Aorta (tissue), 5 donors: ENCODE measurements at regions of chr5 and their contacts with region 1.

Region 1: GRCh38 chr5:112860929-112861637 is at the start of gene SRP19:
- DNase-seq: peak; percentile 97 to 98
- ATAC-seq: peak; percentile 98
- H3K4me3 ChIP-seq: peak within 1 kb of the TSS; percentile 73 to 93
- H3K27ac ChIP-seq: peak within 1 kb of the TSS in 1 of 2 donors; percentile 91
- H3K4me1 ChIP-seq: peaks cover 0 to 8% of the 10 kb centered on the region in 2 donors
- H3K27me3 ChIP-seq: no peaks in the 10 kb centered on the region
- total RNA-seq, gene SRP19: 33.4 to 40.1 TPM

Region 2: GRCh38 chr5:112968411-112969106 is 107.5 kb after region 1 on chr5:
- intact Hi-C with region 1: loop called in 1 of 2 experiments (anchors 10 kb)
- DNase-seq: no peak
- ATAC-seq: no peak
- H3K4me3 ChIP-seq: no peak overlapping the region
- H3K27ac ChIP-seq: no peak overlapping the region
- H3K4me1 ChIP-seq: no peaks in the 10 kb centered on the region
- H3K27me3 ChIP-seq: no peaks in the 10 kb centered on the region

Region 3: GRCh38 chr5:112976432-112977309 is 115.6 kb after region 1 on chr5 and contains the start of gene DCP2:
- intact Hi-C with region 1: loop called in 1 of 2 experiments (anchors 5 kb)
- DNase-seq: peak; percentile 96 to 98
- ATAC-seq: peak; percentile 100
- H3K4me3 ChIP-seq: peak within 1 kb of the TSS; percentile 78 to 89
- H3K27ac ChIP-seq: peak within 1 kb of the TSS; percentile 19 to 73
- H3K4me1 ChIP-seq: peaks cover 0 to 2% of the 10 kb centered on the region in 2 donors
- H3K27me3 ChIP-seq: no peaks in the 10 kb centered on the region
- total RNA-seq, gene DCP2: 38.0 to 59.3 TPM